PC-3 (cell line): ENCODE measurements at regions of chr6 and their contacts with region 1.

Region 1: DNA sequence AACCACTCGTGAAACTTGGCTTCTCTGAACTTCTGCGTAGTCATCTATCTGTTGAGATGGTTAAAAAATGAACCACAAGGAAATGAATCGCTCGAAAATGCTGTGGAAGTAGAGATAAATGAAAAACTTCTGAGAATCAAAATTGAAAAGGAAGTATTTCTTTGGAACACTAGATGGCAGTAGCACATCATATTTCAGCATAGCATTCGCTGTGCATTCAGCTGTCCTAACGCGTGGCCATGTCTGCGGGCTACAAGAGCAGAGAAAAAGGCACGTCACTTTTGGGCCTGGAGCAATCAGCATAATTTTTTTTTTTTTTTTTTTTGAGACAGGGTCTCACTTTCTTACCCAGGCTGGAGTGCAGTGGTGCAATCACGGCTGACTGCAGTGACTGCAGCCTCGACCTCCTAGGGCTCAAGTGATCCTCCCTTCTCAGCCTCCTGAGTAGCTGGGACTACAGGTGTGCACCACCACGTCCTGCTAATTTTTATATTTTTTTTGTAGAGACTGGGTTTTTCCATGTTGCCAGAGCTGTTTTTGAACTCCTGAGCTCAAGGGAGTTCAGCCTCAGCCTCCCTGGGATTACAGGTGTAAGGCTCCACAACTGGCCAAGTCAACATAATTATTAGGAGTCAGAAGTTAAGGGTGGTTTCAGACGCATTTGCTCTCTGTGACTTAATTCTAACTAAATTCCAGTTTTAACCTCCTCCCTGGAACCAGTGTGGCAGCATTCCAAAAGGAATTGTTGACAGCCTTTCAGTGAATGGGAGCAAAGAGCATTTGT is 8.8 kb upstream of the PERP start:
- DNase-seq: peak; percentile 77
- ATAC-seq: peak; percentile 73
- H3K4me3 ChIP-seq: no peak overlapping the region
- H3K27ac ChIP-seq: no peak overlapping the region
- H3K4me1 ChIP-seq: 0 out of 2 replicates have a peak, but pooled peaks cover 4% of the 10 kb centered on the region
- H3K27me3 ChIP-seq: no peaks in the 10 kb centered on the region
- CTCF ChIP-seq: peak; percentile 70

Region 2: GRCh38 chr6:138287144-138287955 is 171.3 kb after region 1 on chr6:
- CTCF ChIA-PET with region 1: interaction called, 6 read pairs
- POLR2A ChIA-PET with region 1: no interaction called
- intact Hi-C with region 1: loop called (anchors 5 kb)
- DNase-seq: peak; percentile 63
- ATAC-seq: peak; percentile 62
- H3K4me3 ChIP-seq: no peak overlapping the region
- H3K27ac ChIP-seq: no peak overlapping the region
- H3K4me1 ChIP-seq: peaks cover 11% of the 10 kb centered on the region
- H3K27me3 ChIP-seq: no peaks in the 10 kb centered on the region
- CTCF ChIP-seq: peak; percentile 75

Region 3: DNA sequence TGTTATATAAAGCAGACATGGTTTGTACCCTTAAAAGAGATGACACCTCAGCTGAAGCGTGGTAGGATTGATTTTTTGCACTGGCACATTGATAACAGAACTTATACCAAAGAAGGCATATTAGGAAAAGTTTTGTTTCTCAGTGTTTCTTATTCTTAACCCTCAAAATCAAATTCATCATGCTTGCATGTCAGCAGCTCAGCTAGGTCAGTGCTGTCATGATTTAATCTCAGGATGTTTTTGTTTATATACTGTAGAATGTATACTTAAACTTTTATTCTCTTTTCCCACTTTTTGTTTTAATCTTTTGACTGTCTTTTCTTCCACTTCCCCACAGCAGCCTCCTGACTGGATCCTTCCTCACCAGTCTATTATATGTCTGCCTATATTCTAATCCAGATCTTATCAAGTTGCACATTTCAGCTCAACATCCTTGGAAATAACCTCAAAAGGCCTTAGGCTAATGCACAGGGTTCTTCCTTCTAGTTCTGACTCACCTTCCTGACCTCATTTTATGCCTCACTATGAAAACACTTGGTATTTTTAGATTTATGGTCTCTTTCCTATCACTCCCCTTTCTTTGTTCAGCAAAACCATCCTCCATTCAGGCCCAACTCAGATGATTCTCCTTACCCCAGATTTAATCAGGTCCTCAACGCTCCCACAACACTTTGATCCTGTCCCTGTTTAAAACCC is 295.1 kb after region 1 on chr6:
- CTCF ChIA-PET with region 1: interaction called, 3 read pairs
- POLR2A ChIA-PET with region 1: no interaction called
- intact Hi-C with region 1: loop called (anchors 5 kb)
- DNase-seq: peak; percentile 91
- ATAC-seq: peak; percentile 93
- H3K4me3 ChIP-seq: no peak overlapping the region
- H3K27ac ChIP-seq: peak overlapping the region; percentile 91
- H3K4me1 ChIP-seq: peaks cover 26% of the 10 kb centered on the region
- H3K27me3 ChIP-seq: no peaks in the 10 kb centered on the region
- CTCF ChIP-seq: no peak

Region 4: DNA sequence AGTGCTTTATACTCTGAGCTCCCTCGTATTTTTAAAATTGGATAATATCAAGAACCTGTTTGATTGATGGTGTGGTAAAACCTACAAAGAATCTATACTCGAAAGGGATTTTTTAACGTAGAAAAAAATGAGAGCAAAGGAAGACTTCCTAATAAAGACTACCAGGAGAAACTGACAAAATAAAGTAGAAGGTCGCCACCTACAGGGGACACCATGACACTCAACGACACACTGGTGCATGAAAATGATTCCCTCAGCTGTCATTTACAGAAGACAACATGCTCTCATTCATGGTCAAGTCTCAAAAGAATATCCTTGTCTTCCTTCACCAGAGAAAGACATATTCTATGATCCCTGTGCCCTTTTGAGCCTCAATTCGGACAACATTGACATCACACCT is 393.3 kb after region 1 on chr6:
- CTCF ChIA-PET with region 1: no interaction called
- POLR2A ChIA-PET with region 1: no interaction called
- intact Hi-C with region 1: loop called (anchors 2 kb)
- DNase-seq: peak; percentile 59
- ATAC-seq: peak; percentile 58; the same call in 1 of the 2 replicates
- H3K4me3 ChIP-seq: no peak overlapping the region
- H3K27ac ChIP-seq: no peak overlapping the region
- H3K4me1 ChIP-seq: 0 out of 2 replicates have a peak, but pooled peaks cover 6% of the 10 kb centered on the region
- H3K27me3 ChIP-seq: no peaks in the 10 kb centered on the region
- CTCF ChIP-seq: peak; percentile 76

Region 5: GRCh38 chr6:138588805-138589434 is 472.9 kb after region 1 on chr6:
- CTCF ChIA-PET with region 1: no interaction called
- POLR2A ChIA-PET with region 1: no interaction called
- intact Hi-C with region 1: loop called (anchors 5 kb)
- DNase-seq: peak; percentile 69
- ATAC-seq: peak; percentile 32
- H3K4me3 ChIP-seq: no peak overlapping the region
- H3K27ac ChIP-seq: no peak overlapping the region
- H3K4me1 ChIP-seq: peaks cover 13% of the 10 kb centered on the region
- H3K27me3 ChIP-seq: no peaks in the 10 kb centered on the region
- CTCF ChIP-seq: peak; percentile 87

Region 6: DNA sequence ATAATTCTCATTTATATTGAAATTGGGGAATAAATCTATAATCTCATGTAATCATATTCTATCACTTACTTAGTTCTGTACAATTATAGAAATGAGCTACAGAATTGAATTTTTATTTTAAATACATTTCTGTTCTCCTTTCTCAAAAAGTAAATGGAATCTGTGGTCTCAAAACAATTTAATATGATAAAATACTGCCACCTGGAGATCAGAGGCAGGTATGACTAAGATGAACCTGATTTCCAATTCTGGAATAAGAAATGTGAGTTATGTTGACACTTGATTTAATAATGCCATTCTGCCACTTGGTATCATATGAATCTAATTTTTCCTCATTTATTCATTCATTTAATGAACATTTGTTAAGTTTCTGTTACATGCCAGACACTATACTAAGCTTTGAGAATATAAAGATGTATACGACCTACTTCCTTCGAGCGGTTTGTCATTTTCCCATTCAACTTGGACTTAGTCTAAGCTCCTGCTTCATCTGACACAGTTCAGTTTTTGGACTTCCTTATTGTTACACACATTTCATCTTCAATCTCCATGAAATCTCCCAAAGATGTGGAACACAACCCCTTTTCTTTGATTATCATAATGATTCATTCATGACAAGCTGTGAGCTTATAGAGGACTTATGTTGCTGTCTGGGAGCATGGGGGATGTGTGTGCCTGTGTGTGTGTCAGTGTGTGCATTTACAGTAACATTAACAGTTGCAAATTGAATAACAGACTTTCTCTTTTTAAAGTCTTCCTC is 650.0 kb after region 1 on chr6:
- CTCF ChIA-PET with region 1: no interaction called
- POLR2A ChIA-PET with region 1: no interaction called
- intact Hi-C with region 1: loop called (anchors 5 kb)
- DNase-seq: peak; percentile 66
- ATAC-seq: no peak
- H3K4me3 ChIP-seq: no peak overlapping the region
- H3K27ac ChIP-seq: no peak overlapping the region
- H3K4me1 ChIP-seq: no peaks in the 10 kb centered on the region
- H3K27me3 ChIP-seq: no peaks in the 10 kb centered on the region
- CTCF ChIP-seq: peak; percentile 76